ENCODE measurements at regions of chr3 and their contacts with region 1.

Region 1: GRCh38 chr3:58874795-58875194 is 175.0 kb downstream of the CFAP20DC start:
- DNase-seq: no peak
- H3K4me3 Mint-ChIP-seq: no peak overlapping the region
- H3K27ac Mint-ChIP-seq: peak overlapping the region; percentile 88
- H3K4me1 Mint-ChIP-seq: peaks cover 16% of the 10 kb centered on the region
- H3K27me3 Mint-ChIP-seq: peaks cover 11% of the 10 kb centered on the region

Region 2: GRCh38 chr3:58899159-58899952 is 24.6 kb after region 1 on chr3:
- intact Hi-C with region 1: loop called (anchors 1 kb)
- DNase-seq: peak; percentile 36
- H3K4me3 Mint-ChIP-seq: no peak overlapping the region
- H3K27ac Mint-ChIP-seq: peak overlapping the region; percentile 29
- H3K4me1 Mint-ChIP-seq: peaks cover 30% of the 10 kb centered on the region
- H3K27me3 Mint-ChIP-seq: peaks cover 13% of the 10 kb centered on the region